Ascending aorta (tissue), 2 donors: ENCODE measurements at regions of chr19 and their contacts with region 1.

Region 1: DNA sequence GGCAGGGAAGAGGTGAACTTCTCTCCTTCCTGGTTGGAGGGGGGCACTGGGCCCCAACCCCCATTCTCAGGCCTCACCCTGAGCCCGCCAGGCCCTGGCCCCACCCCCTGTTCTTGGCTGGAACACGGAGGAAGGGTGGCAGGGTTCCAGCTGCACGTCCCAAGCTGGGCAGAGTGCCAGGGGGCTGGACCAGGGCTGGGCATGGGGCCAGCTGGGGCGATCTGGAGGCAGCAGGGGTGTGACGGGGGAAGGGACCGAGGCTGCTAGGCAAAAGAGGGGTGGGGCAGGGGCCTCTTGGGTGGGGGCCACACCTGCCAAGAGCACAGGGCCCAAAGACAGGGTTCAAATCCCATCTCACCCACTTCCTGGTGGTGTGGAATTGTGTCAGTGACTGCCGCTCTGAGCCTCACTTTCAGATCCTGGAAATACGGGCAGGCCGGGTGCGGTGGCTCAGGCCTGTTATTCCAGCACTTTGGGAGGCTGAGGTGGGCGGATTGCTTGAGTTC is 2.2 kb downstream of the HIF3A start:
- DNase-seq: peak; percentile 81 to 97
- H3K4me3 ChIP-seq: peak overlapping the region; percentile 65 to 72
- H3K27ac ChIP-seq: peak overlapping the region; percentile 90 to 97
- H3K4me1 ChIP-seq: peaks cover 21 to 60% of the 10 kb centered on the region in 2 donors
- H3K27me3 ChIP-seq: no peaks in the 10 kb centered on the region
- CTCF ChIP-seq: no peak

Region 2: GRCh38 chr19:46283771-46284170 is 15.3 kb before region 1 on chr19:
- intact Hi-C with region 1: loop called (anchors 2 kb)
- DNase-seq: no peak
- H3K4me3 ChIP-seq: no peak overlapping the region
- H3K27ac ChIP-seq: no peak overlapping the region
- H3K4me1 ChIP-seq: no peaks in the 10 kb centered on the region
- H3K27me3 ChIP-seq: no peaks in the 10 kb centered on the region
- CTCF ChIP-seq: no peak

Region 3: GRCh38 chr19:46317339-46317738 is 18.3 kb after region 1 on chr19:
- intact Hi-C with region 1: loop called (anchors 2 kb)
- DNase-seq: no peak
- H3K4me3 ChIP-seq: no peak overlapping the region
- H3K27ac ChIP-seq: peak overlapping the region; percentile 52 to 74
- H3K4me1 ChIP-seq: peaks cover 9 to 21% of the 10 kb centered on the region in 2 donors
- H3K27me3 ChIP-seq: no peaks in the 10 kb centered on the region
- CTCF ChIP-seq: no peak

Region 4: DNA sequence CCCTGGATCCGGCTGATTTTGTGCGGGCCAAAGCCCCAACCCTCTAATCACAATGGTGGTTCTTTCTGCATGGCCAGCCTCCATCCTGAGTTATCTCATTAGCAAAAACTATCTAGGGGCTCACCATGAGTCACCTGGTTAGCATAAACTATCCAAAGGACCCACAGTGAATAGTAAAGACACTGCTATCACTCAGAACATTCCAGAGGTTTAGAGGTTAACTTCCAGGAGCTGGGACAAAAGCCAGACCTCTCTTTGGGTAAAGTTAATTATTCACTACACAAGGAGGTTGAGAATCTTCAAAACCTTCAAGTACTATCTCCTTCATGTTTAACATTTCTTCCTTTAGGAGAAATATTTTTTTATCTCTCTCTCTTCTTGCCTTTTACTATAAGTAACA is 29.0 kb after region 1 on chr19:
- intact Hi-C with region 1: no loop called
- DNase-seq: no peak
- H3K4me3 ChIP-seq: no peak overlapping the region
- H3K27ac ChIP-seq: no peak overlapping the region
- H3K4me1 ChIP-seq: no peaks in the 10 kb centered on the region
- H3K27me3 ChIP-seq: no peaks in the 10 kb centered on the region
- CTCF ChIP-seq: no peak

Region 5: DNA sequence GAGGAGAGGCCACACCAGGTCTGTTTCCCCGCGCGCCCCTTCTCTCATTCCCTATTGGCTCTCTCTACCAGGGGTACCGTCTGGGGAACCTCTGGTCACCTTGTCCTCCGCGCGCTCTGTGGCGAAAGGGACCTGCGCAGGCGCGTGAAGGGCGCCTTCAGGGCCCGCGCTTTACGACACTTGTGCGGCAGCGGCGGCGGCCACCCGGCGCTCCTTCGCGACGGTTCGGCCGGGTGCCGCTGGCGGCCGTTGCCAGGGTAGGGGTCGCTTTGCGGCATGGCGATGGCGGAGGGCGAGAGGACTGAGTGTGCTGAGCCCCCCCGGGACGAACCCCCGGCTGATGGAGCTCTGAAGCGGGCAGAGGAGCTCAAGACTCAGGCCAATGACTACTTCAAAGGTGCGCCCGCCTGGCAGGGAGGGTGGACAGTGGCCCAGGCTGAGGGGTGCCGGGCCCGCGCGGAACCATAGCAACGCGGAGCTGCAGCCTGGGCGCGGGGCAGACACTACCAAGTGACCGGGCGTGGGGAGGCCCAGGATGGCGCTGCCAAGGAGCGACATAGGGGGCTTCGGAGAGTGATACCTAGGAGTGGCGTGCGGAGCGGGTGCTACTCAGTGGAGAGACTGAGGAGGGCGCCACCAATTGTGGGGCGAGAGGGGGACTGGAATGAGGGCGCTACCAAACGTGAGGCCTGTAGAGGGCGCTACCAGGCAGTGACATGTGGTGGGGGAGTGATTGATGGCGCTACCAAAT is 47.9 kb after region 1 on chr19 and contains the start of gene PPP5C:
- intact Hi-C with region 1: loop called (anchors 2 kb)
- DNase-seq: peak; percentile 48 to 94
- H3K4me3 ChIP-seq: peak within 1 kb of the TSS; percentile 91 to 98
- H3K27ac ChIP-seq: peak within 1 kb of the TSS; percentile 66 to 72
- H3K4me1 ChIP-seq: peaks cover 23 to 49% of the 10 kb centered on the region in 2 donors
- H3K27me3 ChIP-seq: no peaks in the 10 kb centered on the region
- CTCF ChIP-seq: peak; percentile 72 to 84 (median 80)
- total RNA-seq, gene PPP5C: 96.1 TPM

Region 6: DNA sequence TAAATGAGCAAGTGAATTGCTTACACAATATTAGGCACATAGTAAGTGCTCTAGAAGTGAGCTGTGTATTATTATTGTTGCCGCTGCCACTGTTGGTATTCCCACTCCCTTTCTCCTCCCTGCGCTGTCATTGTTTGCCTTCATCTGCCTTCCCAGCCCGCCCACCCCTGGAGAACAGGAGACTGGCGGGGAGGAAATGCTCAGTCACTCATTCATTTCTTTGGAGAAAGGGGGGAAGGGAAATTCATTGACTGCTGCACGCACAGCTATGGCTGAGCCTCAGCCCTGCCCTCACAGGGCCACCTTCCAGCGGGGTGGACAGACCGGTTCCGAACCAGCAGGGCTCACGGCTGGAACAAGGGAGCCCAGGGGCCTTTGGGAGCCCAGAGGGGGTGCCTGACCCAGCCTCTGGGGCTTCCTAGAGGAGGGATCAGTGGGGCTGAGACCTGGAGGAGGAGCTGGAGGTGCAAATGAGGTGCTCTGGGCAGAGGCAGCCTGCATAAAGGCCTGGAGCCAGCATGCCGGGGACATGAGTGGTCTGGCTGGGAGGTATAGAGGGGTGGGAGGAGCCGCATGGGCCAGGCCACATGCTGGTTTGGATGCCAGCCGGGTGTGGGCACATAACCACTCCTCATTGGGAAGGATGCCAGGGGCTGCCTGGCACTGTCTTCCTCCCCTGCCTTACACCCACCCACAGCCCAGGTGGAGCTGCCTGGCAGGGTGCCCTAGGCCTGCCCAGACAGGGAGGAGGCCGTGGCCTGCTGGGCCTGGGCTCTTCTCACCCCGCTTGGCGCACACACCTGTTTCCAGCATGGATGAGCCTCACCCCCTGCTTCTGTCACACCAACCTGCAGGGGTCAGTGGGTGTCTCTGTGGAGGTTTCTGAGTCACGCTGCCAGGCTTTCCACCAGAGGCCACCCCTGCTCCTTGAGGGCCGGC is 74.6 kb after region 1 on chr19:
- intact Hi-C with region 1: loop called (anchors 5 kb)
- DNase-seq: peak; percentile 51 to 84
- H3K4me3 ChIP-seq: peak overlapping the region in 1 of 2 donors; percentile 35
- H3K27ac ChIP-seq: peak overlapping the region; percentile 85 to 90
- H3K4me1 ChIP-seq: peaks cover 10 to 32% of the 10 kb centered on the region in 2 donors
- H3K27me3 ChIP-seq: no peaks in the 10 kb centered on the region
- CTCF ChIP-seq: no peak

Region 7: DNA sequence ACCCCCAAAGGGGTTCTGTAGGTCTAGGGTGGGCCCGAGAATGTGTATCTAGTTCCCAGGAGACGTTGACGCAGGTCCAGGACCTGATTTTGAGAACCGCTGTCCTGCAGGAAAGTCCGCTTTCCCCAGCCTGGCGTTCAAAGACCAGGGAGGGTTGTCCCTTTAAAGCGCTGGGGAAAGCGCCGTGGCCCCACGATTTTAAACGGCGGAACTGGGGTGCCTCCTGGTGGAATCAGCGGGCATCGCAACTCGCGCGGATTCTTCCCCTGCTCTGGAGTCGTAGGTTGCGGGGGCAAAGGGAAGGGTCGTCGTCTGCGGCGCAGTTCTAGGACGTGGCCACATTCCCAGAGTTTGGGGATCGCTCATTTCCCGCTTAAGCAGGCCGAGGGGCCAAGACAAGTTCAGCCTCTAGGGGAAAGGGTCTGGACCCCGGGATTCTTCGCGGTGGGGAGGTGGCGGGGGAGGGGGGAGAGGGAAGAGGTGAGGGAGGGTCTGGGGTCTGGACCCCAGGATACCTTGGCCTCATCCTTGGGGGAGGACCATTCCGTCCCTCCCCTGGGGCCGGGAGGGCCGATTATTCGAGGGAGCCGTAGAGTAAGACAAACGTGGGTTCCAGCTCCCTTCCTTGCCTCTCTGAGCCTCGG is 188.9 kb after region 1 on chr19:
- intact Hi-C with region 1: loop called (anchors 5 kb)
- DNase-seq: peak in 1 of 2 donors; percentile 90
- H3K4me3 ChIP-seq: peak overlapping the region; percentile 56 to 67
- H3K27ac ChIP-seq: peak overlapping the region in 1 of 2 donors; percentile 51
- H3K4me1 ChIP-seq: peaks cover 11 to 19% of the 10 kb centered on the region in 2 donors
- H3K27me3 ChIP-seq: no peaks in the 10 kb centered on the region
- CTCF ChIP-seq: peak; percentile 93 to 99 (median 99)